Tibial artery (tissue), 4 donors: ENCODE measurements at regions of chr11 and their contacts with region 1.

Region 1: GRCh38 chr11:110200241-110200640 is 96.2 kb downstream of the RDX start:
- DNase-seq: no peak
- H3K4me3 ChIP-seq: no peak overlapping the region
- H3K27ac ChIP-seq: no peak overlapping the region
- H3K4me1 ChIP-seq: no peaks in the 10 kb centered on the region
- H3K27me3 ChIP-seq: no peaks in the 10 kb centered on the region
- CTCF ChIP-seq: no peak

Region 2: GRCh38 chr11:108453207-108453835 is 1746.9 kb before region 1 on chr11:
- intact Hi-C with region 1: no loop called
- DNase-seq: no peak
- H3K4me3 ChIP-seq: no peak overlapping the region
- H3K27ac ChIP-seq: no peak overlapping the region
- H3K4me1 ChIP-seq: no peaks in the 10 kb centered on the region
- H3K27me3 ChIP-seq: no peaks in the 10 kb centered on the region
- CTCF ChIP-seq: no peak

Region 3: GRCh38 chr11:110160016-110160415 is 40.2 kb before region 1 on chr11:
- intact Hi-C with region 1: no loop called
- DNase-seq: no peak
- H3K4me3 ChIP-seq: no peak overlapping the region
- H3K27ac ChIP-seq: no peak overlapping the region
- H3K4me1 ChIP-seq: no peaks in the 10 kb centered on the region
- H3K27me3 ChIP-seq: no peaks in the 10 kb centered on the region
- CTCF ChIP-seq: no peak

Region 4: GRCh38 chr11:110366291-110366690 is 166.1 kb after region 1 on chr11:
- intact Hi-C with region 1: loop called (anchors 5 kb)
- DNase-seq: no peak
- H3K4me3 ChIP-seq: no peak overlapping the region
- H3K27ac ChIP-seq: no peak overlapping the region
- H3K4me1 ChIP-seq: no peaks in the 10 kb centered on the region
- H3K27me3 ChIP-seq: no peaks in the 10 kb centered on the region
- CTCF ChIP-seq: no peak